ENCODE measurements at regions of chr6 and their contacts with region 1.

Region 1: DNA sequence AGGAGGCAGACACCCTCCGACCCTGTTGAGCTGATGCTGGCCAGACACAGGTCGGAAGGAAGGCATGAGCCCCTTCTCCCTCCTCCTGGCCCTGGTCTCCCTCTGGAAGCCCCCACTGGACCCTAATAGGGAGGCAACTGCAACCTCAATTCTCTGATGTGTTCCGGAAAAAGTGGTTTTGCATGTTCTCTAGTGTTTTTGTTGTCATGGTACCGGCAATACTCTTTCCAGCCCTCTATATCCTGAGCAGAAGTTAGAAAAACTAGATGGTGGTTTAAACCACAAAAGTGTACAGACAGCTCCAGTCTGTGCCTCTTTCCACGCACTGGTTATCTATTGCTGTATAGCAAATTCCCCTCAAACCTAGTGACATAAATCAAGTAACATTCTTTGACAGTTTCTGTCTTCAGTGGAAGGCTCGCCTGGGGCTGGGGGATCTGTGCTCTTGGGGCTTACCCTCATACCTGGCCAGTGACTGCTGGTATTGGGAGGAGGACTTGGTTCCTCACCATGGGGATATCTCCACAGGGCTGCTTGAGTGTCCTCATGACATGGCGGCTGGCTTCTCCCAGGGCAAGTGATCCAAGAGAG is 37.0 kb downstream of the SYTL3 start:
- DNase-seq: no peak
- ATAC-seq: 0 out of 2 replicates have a peak, but pooled peaks have one; percentile 43
- H3K4me3 ChIP-seq: no peak overlapping the region
- H3K27ac ChIP-seq: no peak overlapping the region
- H3K4me1 ChIP-seq: no peaks in the 10 kb centered on the region
- H3K27me3 ChIP-seq: no peaks in the 10 kb centered on the region
- CTCF ChIP-seq: no peak

Region 2: DNA sequence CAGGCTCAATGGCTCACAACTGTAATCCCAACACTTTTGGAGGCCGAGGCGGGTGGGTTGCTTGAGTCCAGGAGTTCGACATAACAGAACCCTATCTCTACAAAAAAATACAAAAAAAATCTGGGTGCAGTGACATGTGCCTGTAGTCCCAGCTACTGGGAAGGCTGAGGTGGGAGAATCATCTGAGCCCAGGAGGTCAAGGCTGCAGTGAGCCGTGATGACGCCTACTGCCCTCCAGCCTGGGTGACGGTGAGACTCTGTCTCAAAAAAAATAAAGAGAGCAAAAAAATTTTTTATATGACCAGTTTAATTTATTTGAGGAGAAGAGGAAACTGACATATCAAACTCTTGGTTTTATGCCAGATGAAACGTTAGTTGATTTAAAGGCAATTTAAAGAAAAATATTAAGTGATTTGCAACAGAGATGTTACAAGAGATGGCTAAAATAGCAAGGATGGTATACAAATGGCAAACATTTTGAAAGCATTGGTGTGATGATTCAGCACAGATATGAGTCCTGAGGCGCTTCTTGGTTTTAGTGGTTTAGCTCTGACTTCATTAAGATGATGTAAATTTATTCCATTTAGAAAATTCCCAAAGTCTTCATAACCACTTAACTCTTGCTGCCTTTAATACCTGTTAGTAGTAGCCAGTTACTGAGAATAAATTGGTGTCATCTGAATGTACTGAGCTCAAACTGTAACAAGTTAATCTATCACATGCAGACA is 501.0 kb before region 1 on chr6:
- CTCF ChIA-PET with region 1: no interaction called
- POLR2A ChIA-PET with region 1: no interaction called
- in situ Hi-C with region 1: no loop called
- intact Hi-C with region 1: no loop called
- DNase-seq: no peak
- ATAC-seq: no peak
- H3K4me3 ChIP-seq: no peak overlapping the region
- H3K27ac ChIP-seq: no peak overlapping the region
- H3K4me1 ChIP-seq: no peaks in the 10 kb centered on the region
- H3K27me3 ChIP-seq: no peaks in the 10 kb centered on the region
- CTCF ChIP-seq: no peak

Region 3: GRCh38 chr6:158213925-158214674 is 472.8 kb before region 1 on chr6:
- CTCF ChIA-PET with region 1: interaction called, 19 read pairs
- POLR2A ChIA-PET with region 1: no interaction called
- in situ Hi-C with region 1: no loop called
- intact Hi-C with region 1: loop called (anchors 2 kb)
- DNase-seq: peak; percentile 72
- ATAC-seq: peak; percentile 100
- H3K4me3 ChIP-seq: no peak overlapping the region
- H3K27ac ChIP-seq: no peak overlapping the region
- H3K4me1 ChIP-seq: no peaks in the 10 kb centered on the region
- H3K27me3 ChIP-seq: no peaks in the 10 kb centered on the region
- CTCF ChIP-seq: peak; percentile 88

Region 4: GRCh38 chr6:158452182-158452581 is 234.7 kb before region 1 on chr6:
- CTCF ChIA-PET with region 1: no interaction called
- POLR2A ChIA-PET with region 1: no interaction called
- in situ Hi-C with region 1: no loop called
- intact Hi-C with region 1: no loop called
- DNase-seq: no peak
- ATAC-seq: no peak
- H3K4me3 ChIP-seq: no peak overlapping the region
- H3K27ac ChIP-seq: no peak overlapping the region
- H3K4me1 ChIP-seq: no peaks in the 10 kb centered on the region
- H3K27me3 ChIP-seq: no peaks in the 10 kb centered on the region
- CTCF ChIP-seq: no peak

Region 5: DNA sequence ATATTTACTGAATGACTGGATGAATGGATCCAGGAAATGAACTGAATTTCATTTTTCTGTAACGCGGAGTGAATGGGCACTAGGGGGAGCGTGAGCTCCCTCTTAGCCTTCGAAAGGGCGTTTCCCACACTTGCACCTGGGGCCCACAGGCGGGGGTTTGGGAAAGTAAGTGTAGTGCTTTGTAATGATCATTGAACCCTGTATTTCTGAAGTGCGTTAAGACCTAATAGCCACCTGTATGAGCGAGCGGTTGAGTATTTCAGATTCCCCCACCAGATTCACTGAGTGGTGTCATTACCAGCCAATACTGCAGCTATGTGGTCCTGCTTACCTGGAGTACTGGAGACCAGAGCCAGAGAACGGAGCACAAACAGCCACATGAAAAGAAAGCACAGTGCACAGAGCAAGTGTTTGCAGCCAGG is 26.5 kb before region 1 on chr6:
- CTCF ChIA-PET with region 1: interaction called, 10 read pairs
- POLR2A ChIA-PET with region 1: no interaction called
- in situ Hi-C with region 1: no loop called
- intact Hi-C with region 1: no loop called
- DNase-seq: no peak
- ATAC-seq: peak; percentile 79
- H3K4me3 ChIP-seq: no peak overlapping the region
- H3K27ac ChIP-seq: no peak overlapping the region
- H3K4me1 ChIP-seq: no peaks in the 10 kb centered on the region
- H3K27me3 ChIP-seq: no peaks in the 10 kb centered on the region; the same call in 1 of the 2 replicates
- CTCF ChIP-seq: peak; percentile 43

Region 6: GRCh38 chr6:158674342-158675131 is 12.3 kb before region 1 on chr6:
- CTCF ChIA-PET with region 1: no interaction called
- POLR2A ChIA-PET with region 1: interaction called, 12 read pairs
- in situ Hi-C with region 1: no loop called
- intact Hi-C with region 1: no loop called
- DNase-seq: no peak
- ATAC-seq: no peak
- H3K4me3 ChIP-seq: no peak overlapping the region
- H3K27ac ChIP-seq: no peak overlapping the region
- H3K4me1 ChIP-seq: no peaks in the 10 kb centered on the region; the same call in 1 of the 2 replicates
- H3K27me3 ChIP-seq: no peaks in the 10 kb centered on the region; the same call in 1 of the 2 replicates
- CTCF ChIP-seq: no peak